Stomach (tissue), 19 donors: ENCODE measurements at regions of chr22 and their contacts with region 1.

Region 1: GRCh38 chr22:19479357-19480172 is at the start of gene CDC45:
- DNase-seq: peak; percentile 95 to 99
- H3K4me3 ChIP-seq: peak within 1 kb of the TSS; percentile 66 to 97 (median 84)
- H3K27ac ChIP-seq: peak within 1 kb of the TSS; percentile 91 to 98 (median 95)
- H3K4me1 ChIP-seq: peaks cover 12 to 45% (median 33%) of the 10 kb centered on the region in 4 donors
- H3K27me3 ChIP-seq: no peaks in the 10 kb centered on the region
- CTCF ChIP-seq: peak in 1 of 7 experiments; percentile 13
- EP300 ChIP-seq: no peak
- POLR2A ChIP-seq: no peak
- total RNA-seq, gene CDC45: 1.2 to 44.2 (median 4.9) TPM in 4 of 5 donors, not detected in the other

Region 2: DNA sequence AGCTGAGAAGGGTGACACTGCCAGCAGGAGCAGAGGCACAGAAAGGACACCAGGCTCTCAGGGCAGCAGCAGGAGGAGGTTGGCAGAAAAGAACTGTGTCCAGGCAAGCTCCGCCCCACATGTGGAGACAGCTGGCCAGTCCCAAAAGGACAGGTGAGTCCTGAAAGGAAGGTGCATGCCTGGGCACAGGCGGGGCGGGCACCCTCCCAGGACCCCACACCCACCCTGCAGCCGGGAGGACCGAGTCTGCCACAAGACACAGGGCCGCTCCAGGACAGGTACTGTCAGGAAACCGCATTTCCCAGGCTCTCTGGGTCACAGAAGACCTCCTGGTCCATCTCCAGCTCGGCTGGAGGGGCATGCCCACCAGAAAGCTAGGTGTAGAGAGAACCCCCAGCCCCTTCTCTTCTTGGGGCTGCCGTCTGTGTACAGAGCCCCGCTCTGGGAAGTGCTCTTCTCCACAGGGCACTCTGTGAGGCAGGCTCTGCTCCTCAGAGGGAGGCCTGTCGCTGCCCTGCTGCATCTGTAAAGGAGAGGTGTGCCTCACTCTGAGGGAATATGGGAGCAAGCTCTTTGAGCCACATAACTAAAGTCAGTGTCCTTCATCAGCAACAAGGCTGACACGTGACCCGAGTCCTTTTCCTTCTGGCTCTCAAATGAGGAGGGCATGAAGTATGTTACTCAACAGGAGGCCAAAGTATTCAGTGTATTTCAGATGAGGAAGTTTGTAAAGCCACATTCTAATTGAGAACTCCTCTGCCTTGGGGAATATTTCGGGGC is 238.6 kb before region 1 on chr22:
- intact Hi-C with region 1: no loop called
- DNase-seq: no peak
- H3K4me3 ChIP-seq: no peak overlapping the region
- H3K27ac ChIP-seq: no peak overlapping the region
- H3K4me1 ChIP-seq: peaks cover 0 to 7% (median 0%) of the 10 kb centered on the region in 4 donors
- H3K27me3 ChIP-seq: no peaks in the 10 kb centered on the region
- CTCF ChIP-seq: no peak
- EP300 ChIP-seq: no peak
- POLR2A ChIP-seq: no peak

Region 3: DNA sequence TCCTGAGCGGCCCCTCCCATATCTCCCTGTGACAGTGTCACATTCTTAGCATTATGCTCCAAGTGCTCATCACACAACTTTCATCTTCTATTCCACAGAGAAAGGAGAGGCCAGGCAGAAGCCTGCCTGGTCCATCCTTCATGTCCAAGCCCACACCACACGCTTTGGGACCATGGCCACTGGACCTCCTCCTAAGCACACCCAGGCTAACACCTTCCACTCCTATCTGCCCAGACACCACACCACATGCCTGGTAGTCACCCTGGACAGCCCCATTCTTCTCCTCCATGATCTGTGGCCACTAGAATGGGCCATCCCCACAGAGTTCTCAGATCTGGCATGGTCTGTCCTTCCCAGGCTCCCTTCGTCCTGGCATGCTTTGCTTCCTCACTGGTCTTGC is 103.3 kb before region 1 on chr22:
- intact Hi-C with region 1: no loop called
- DNase-seq: no peak
- H3K4me3 ChIP-seq: no peak overlapping the region
- H3K27ac ChIP-seq: no peak overlapping the region
- H3K4me1 ChIP-seq: no peaks in the 10 kb centered on the region
- H3K27me3 ChIP-seq: no peaks in the 10 kb centered on the region
- CTCF ChIP-seq: no peak
- EP300 ChIP-seq: no peak
- POLR2A ChIP-seq: no peak

Region 4: DNA sequence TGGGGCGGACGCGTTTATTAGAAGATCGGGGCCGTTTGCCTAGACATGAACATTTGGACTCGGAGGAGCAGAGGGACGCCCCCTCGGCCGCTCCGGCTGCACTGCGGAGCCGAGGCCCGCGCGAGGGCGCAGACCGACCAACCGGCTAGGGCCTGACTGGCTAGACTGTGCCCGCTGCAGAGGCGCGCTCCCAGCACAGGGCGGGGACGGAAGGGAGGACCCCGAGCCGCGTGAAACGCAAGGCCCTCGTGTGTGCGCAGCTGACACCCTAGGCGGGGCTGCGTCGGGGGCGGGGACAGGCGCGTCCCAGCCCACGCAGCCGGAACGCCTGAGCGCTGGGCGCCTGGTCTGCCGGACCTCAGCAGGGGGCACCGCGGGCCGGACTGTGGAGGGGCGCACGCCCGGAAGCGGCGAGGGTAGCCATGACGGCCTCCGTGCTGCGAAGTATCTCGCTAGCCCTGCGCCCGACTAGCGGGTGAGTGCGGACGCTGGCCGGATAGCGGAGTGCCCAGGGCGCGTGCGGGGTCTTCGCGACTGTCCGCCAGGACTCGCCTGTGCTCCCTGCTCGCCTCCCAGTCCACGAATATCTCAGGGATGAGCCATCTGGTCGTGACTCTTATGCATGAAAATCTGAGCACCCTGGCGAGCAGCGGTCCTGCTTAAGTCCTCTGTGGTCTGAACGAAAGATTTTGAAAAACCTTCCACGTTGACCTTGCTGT is 47.3 kb before region 1 on chr22 and contains the start of gene MRPL40:
- intact Hi-C with region 1: loop called (anchors 5 kb)
- DNase-seq: peak; percentile 94 to 98
- H3K4me3 ChIP-seq: peak within 1 kb of the TSS; percentile 86 to 98 (median 94)
- H3K27ac ChIP-seq: peak within 1 kb of the TSS; percentile 93 to 99 (median 96)
- H3K4me1 ChIP-seq: peaks cover 23 to 58% (median 37%) of the 10 kb centered on the region in 4 donors
- H3K27me3 ChIP-seq: no peaks in the 10 kb centered on the region
- CTCF ChIP-seq: peak in 1 of 7 experiments; percentile 17
- EP300 ChIP-seq: no peak
- POLR2A ChIP-seq: peak in 1 of 4 donors; percentile 6
- total RNA-seq, gene MRPL40: 2.3 to 25.0 (median 11.2) TPM

Region 5: DNA sequence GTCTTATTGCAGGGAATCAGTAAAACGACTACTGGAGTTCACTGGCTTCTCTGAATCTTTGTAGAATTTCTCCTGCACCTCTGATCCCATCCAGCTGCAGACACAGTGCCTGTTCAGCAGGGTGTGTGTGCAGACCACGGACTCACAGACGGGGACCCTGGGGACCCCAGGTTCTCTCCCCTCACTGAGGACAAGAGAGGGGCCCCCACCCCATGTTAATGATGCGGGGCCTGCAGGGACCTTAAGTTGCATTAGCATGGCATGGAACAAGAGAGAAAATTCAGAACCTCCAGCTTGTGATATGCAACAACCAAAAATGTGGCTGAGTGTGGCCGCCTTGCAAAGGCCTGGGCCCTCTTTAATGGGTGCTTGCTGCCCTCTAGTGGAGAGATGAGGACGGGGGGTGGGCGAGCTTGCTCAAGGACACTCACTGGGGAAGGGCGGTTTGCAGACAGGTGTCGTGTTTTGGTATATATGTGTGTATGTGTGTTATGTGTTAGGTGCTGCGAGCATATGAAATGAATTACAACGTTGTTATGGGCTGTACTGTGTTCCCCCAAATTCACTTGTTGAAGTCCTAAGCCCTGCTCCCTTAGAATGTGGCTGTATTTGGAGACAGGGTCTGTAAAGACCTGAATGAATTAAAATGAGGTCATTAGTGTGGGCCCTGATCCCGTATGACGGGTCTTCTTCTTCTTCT is 150.3 kb after region 1 on chr22:
- intact Hi-C with region 1: no loop called
- DNase-seq: peak; percentile 86 to 92
- H3K4me3 ChIP-seq: no peak overlapping the region
- H3K27ac ChIP-seq: no peak overlapping the region
- H3K4me1 ChIP-seq: no peaks in the 10 kb centered on the region
- H3K27me3 ChIP-seq: peaks cover 0 to 42% (median 0%) of the 10 kb centered on the region in 3 donors
- CTCF ChIP-seq: peak in 6 of 7 experiments; percentile 74 to 93 (median 84)
- EP300 ChIP-seq: no peak
- POLR2A ChIP-seq: no peak